CD8-positive, alpha-beta memory T cell (primary cell): ENCODE measurements at regions of chr7 and their contacts with region 1.

Region 1: GRCh38 chr7:38215735-38216670 is 38.0 kb downstream of the STARD3NL start:
- DNase-seq: peak; percentile 63 to 88 (median 77)
- H3K4me3 ChIP-seq: peak overlapping the region; percentile 38
- H3K4me3 Mint-ChIP-seq: peak overlapping the region; percentile 53 to 91 (median 80)
- H3K27ac ChIP-seq: no peak overlapping the region
- H3K27ac Mint-ChIP-seq: peak overlapping the region; percentile 88 to 98 (median 94)
- H3K4me1 ChIP-seq: peaks cover 50% of the 10 kb centered on the region
- H3K4me1 Mint-ChIP-seq: peaks cover 53 to 64% (median 62%) of the 10 kb centered on the region in 3 donors
- H3K27me3 ChIP-seq: no peaks in the 10 kb centered on the region
- H3K27me3 Mint-ChIP-seq: no peaks in the 10 kb centered on the region

Region 2: GRCh38 chr7:38171623-38172391 is 44.2 kb before region 1 on chr7:
- CTCF ChIA-PET with region 1: interaction called, 10 read pairs
- POLR2A ChIA-PET with region 1: interaction called, 3 read pairs
- DNase-seq: no peak
- H3K4me3 ChIP-seq: no peak overlapping the region
- H3K4me3 Mint-ChIP-seq: peak overlapping the region in 1 of 7 donors; percentile 49
- H3K27ac ChIP-seq: no peak overlapping the region
- H3K27ac Mint-ChIP-seq: no peak overlapping the region
- H3K4me1 ChIP-seq: no peaks in the 10 kb centered on the region
- H3K4me1 Mint-ChIP-seq: peaks cover 0 to 27% (median 19%) of the 10 kb centered on the region in 3 donors
- H3K27me3 ChIP-seq: no peaks in the 10 kb centered on the region
- H3K27me3 Mint-ChIP-seq: peaks cover 11 to 20% of the 10 kb centered on the region in 2 donors

Region 3: DNA sequence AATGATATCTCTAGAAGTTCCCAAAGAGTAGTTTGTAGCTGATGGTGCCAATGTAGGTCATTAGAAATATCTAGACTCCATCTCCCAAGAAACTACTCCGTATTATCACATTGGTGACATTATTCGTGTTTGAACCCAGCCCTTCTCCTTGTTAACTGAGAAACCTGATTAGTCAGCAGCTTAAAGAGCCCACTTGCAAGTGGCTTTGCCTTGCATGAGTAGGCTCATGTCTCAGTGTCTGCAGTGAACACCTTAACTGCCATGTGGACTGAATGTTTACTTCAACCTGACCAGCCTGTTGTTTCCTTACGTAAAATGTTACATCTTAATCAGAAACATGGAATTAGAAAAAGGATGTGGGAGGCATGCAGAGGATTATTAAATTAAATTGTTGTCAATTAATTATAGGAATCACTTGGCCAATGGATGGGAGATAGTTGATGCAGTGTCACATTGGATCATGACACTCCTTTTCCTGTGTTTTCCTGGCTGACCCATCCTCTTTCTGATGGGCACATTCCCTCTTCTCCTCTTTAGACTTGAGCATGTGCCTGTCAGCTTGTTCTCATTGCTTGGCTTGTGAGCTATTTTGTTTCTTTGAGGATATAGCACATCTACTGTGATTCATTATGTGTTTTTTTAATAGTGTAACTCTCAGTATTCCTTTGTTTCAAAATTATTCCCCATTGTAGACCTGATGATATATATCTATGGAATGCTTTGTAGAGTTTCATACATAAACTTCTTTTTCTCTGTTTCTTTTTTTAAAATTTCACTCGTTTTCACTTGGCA is 20.0 kb before region 1 on chr7:
- CTCF ChIA-PET with region 1: interaction called, 41 read pairs
- POLR2A ChIA-PET with region 1: no interaction called
- DNase-seq: no peak
- H3K4me3 ChIP-seq: no peak overlapping the region
- H3K4me3 Mint-ChIP-seq: no peak overlapping the region
- H3K27ac ChIP-seq: no peak overlapping the region
- H3K27ac Mint-ChIP-seq: peak overlapping the region in 2 of 8 donors; percentile 25 to 29
- H3K4me1 ChIP-seq: peaks cover 9% of the 10 kb centered on the region
- H3K4me1 Mint-ChIP-seq: peaks cover 42 to 77% (median 65%) of the 10 kb centered on the region in 3 donors
- H3K27me3 ChIP-seq: no peaks in the 10 kb centered on the region
- H3K27me3 Mint-ChIP-seq: no peaks in the 10 kb centered on the region

Region 4: GRCh38 chr7:38245409-38245977 is 29.5 kb after region 1 on chr7:
- CTCF ChIA-PET with region 1: interaction called, 10 read pairs
- POLR2A ChIA-PET with region 1: no interaction called
- DNase-seq: peak in 2 of 5 donors; percentile 45 to 53
- H3K4me3 ChIP-seq: no peak overlapping the region
- H3K4me3 Mint-ChIP-seq: peak overlapping the region; percentile 46 to 98 (median 79)
- H3K27ac ChIP-seq: peak overlapping the region; percentile 44
- H3K27ac Mint-ChIP-seq: peak overlapping the region; percentile 90 to 99 (median 96)
- H3K4me1 ChIP-seq: peaks cover 35% of the 10 kb centered on the region
- H3K4me1 Mint-ChIP-seq: peaks cover 78 to 84% (median 84%) of the 10 kb centered on the region in 3 donors
- H3K27me3 ChIP-seq: no peaks in the 10 kb centered on the region
- H3K27me3 Mint-ChIP-seq: peaks cover 0 to 2% of the 10 kb centered on the region in 2 donors

Region 5: GRCh38 chr7:38327637-38328036 is 111.6 kb after region 1 on chr7:
- CTCF ChIA-PET with region 1: interaction called, 36 read pairs
- POLR2A ChIA-PET with region 1: no interaction called
- DNase-seq: no peak
- H3K4me3 ChIP-seq: no peak overlapping the region
- H3K4me3 Mint-ChIP-seq: peak overlapping the region in 5 of 7 donors; percentile 32 to 65 (median 46)
- H3K27ac ChIP-seq: no peak overlapping the region
- H3K27ac Mint-ChIP-seq: peak overlapping the region; percentile 63 to 92 (median 80)
- H3K4me1 ChIP-seq: peaks cover 13% of the 10 kb centered on the region
- H3K4me1 Mint-ChIP-seq: peaks cover 51 to 74% (median 65%) of the 10 kb centered on the region in 3 donors
- H3K27me3 ChIP-seq: no peaks in the 10 kb centered on the region
- H3K27me3 Mint-ChIP-seq: no peaks in the 10 kb centered on the region

Region 6: GRCh38 chr7:38351601-38352000 is 135.6 kb after region 1 on chr7:
- CTCF ChIA-PET with region 1: interaction called, 12 read pairs
- POLR2A ChIA-PET with region 1: no interaction called
- DNase-seq: no peak
- H3K4me3 ChIP-seq: no peak overlapping the region
- H3K4me3 Mint-ChIP-seq: peak overlapping the region in 6 of 7 donors; percentile 85 to 94 (median 92)
- H3K27ac ChIP-seq: no peak overlapping the region
- H3K27ac Mint-ChIP-seq: peak overlapping the region in 4 of 8 donors; percentile 35 to 78 (median 63)
- H3K4me1 ChIP-seq: no peaks in the 10 kb centered on the region
- H3K4me1 Mint-ChIP-seq: peaks cover 4 to 31% (median 28%) of the 10 kb centered on the region in 3 donors
- H3K27me3 ChIP-seq: no peaks in the 10 kb centered on the region
- H3K27me3 Mint-ChIP-seq: no peaks in the 10 kb centered on the region

Region 7: GRCh38 chr7:38369816-38370493 is 154.0 kb after region 1 on chr7:
- CTCF ChIA-PET with region 1: interaction called, 394 read pairs
- POLR2A ChIA-PET with region 1: interaction called, 34 read pairs
- DNase-seq: peak; percentile 67 to 88 (median 75)
- H3K4me3 ChIP-seq: no peak overlapping the region
- H3K4me3 Mint-ChIP-seq: peak overlapping the region; percentile 66 to 87 (median 73)
- H3K27ac ChIP-seq: no peak overlapping the region
- H3K27ac Mint-ChIP-seq: peak overlapping the region; percentile 79 to 98 (median 95)
- H3K4me1 ChIP-seq: peaks cover 62% of the 10 kb centered on the region
- H3K4me1 Mint-ChIP-seq: peaks cover 74 to 90% (median 86%) of the 10 kb centered on the region in 3 donors
- H3K27me3 ChIP-seq: no peaks in the 10 kb centered on the region
- H3K27me3 Mint-ChIP-seq: peaks cover 0 to 1% of the 10 kb centered on the region in 2 donors